ENCODE measurements at regions of chr15 and their contacts with region 1.

Region 1: DNA sequence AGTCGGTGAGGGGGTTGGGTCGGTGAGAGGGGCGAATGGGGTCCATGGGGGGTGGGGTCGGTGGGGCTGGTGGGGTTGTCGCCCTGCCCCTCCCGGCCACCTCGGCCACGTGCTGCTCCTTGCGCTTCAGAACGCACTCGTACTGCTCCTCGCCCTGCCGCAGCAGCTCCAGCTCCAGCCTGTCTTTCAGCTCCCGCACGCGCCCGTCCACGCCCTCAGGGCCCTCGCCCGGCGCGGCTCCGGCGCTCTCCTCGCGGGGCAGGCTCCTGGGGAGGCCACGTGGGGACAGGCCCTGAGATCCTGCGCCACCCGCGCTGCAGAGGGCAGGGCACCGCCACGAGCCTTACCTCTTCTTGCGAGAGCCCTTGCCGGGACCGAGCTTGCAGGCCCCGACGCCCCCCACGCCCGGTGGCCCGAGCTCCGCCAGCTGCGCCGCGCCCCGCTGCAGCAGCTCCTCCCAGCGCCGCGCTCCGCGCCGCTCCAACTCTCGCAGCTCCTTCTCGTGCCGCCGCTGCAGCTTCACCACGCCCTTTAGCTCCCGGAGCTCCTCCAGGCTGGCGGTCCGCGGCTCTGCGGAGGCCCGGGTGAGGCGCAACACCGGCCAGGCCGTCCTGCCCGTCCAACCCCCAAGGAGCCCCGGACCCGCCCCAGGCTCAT is 8.2 kb upstream of the ANKRD63 start:
- DNase-seq: peak; percentile 63
- H3K4me3 Mint-ChIP-seq: peak overlapping the region; percentile 62
- H3K27ac Mint-ChIP-seq: no peak overlapping the region
- H3K4me1 Mint-ChIP-seq: peaks cover 4% of the 10 kb centered on the region
- H3K27me3 Mint-ChIP-seq: peaks cover 10% of the 10 kb centered on the region
- CTCF ChIP-seq: no peak

Region 2: GRCh38 chr15:40226736-40227135 is 64.3 kb before region 1 on chr15:
- CTCF ChIA-PET with region 1: no interaction called
- POLR2A ChIA-PET with region 1: no interaction called
- intact Hi-C with region 1: no loop called
- DNase-seq: no peak
- H3K4me3 Mint-ChIP-seq: no peak overlapping the region
- H3K27ac Mint-ChIP-seq: no peak overlapping the region
- H3K4me1 Mint-ChIP-seq: peaks cover 2% of the 10 kb centered on the region
- H3K27me3 Mint-ChIP-seq: no peaks in the 10 kb centered on the region
- CTCF ChIP-seq: no peak

Region 3: DNA sequence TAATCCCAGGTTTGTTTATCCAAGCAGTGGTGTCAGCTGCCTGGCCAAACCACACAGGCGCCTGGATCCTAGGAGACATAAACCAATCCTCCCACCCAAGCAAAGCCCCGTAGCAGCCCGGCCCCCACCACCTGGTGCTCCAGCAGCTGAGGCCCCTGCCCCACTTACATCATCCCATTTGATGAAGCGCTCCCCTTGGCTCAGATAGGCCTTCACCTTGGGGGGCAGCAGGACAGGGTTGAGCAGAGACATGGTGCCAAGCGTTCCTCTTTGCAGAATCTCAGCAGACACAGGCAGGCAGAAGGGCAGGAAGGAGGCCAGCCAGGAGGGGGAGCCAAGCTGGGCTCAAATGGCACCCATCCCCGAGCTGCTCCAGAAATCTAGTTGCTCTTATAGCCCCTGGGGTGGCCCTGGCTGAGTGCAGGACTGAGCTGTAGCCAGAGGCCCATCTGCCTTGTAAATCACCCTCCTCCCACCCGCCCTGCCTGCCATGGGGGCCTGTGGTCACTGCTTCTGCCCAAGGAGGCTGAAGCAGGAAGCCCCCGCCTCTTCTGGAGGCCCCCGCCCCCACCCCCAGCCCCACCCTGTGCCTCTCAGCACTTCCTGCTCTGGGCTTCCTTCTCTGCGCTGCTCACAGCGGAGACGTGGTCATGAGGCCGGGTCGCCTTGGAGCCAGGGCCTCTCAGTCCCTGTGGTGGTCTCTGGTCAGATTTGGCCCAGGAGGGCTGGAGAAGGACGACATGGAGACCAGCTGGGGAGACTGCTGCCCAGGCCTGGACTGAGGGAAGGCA is 16.6 kb after region 1 on chr15 and contains the start of gene PLCB2:
- CTCF ChIA-PET with region 1: interaction called, 28 read pairs
- POLR2A ChIA-PET with region 1: interaction called, 4 read pairs
- intact Hi-C with region 1: no loop called
- DNase-seq: no peak
- H3K4me3 Mint-ChIP-seq: no peak within 1 kb of the TSS
- H3K27ac Mint-ChIP-seq: no peak within 1 kb of the TSS
- H3K4me1 Mint-ChIP-seq: no peaks in the 10 kb centered on the region
- H3K27me3 Mint-ChIP-seq: peaks cover 13% of the 10 kb centered on the region
- CTCF ChIP-seq: no peak
- total RNA-seq, gene PLCB2: 0.15 and 0.84 TPM in 2 replicates

Region 4: GRCh38 chr15:40313531-40314398 is 22.7 kb after region 1 on chr15:
- CTCF ChIA-PET with region 1: interaction called, 28 read pairs
- POLR2A ChIA-PET with region 1: interaction called, 3 read pairs
- intact Hi-C with region 1: loop called (anchors 1 kb)
- DNase-seq: peak; percentile 94
- H3K4me3 Mint-ChIP-seq: peak overlapping the region; percentile 18
- H3K27ac Mint-ChIP-seq: no peak overlapping the region
- H3K4me1 Mint-ChIP-seq: peaks cover 13% of the 10 kb centered on the region
- H3K27me3 Mint-ChIP-seq: no peaks in the 10 kb centered on the region
- CTCF ChIP-seq: no peak